Activated CD8-positive, alpha-beta memory T cell treated with anti-CD3 and anti-CD28 coated beads, Interleukin-2, amount 10 ng/mL, durations not matched to agents 7 days and 5 days (primary cell): ENCODE measurements at regions of chr16 and their contacts with region 1.

Region 1: GRCh38 chr16:8878521-8878911 is 3.6 kb upstream of the LITAFD start:
- DNase-seq: no peak
- ATAC-seq: no peak
- H3K4me3 Mint-ChIP-seq: no peak overlapping the region
- H3K27ac Mint-ChIP-seq: peak overlapping the region; percentile 64
- H3K4me1 Mint-ChIP-seq: peaks cover 37% of the 10 kb centered on the region
- H3K27me3 Mint-ChIP-seq: no peaks in the 10 kb centered on the region

Region 2: DNA sequence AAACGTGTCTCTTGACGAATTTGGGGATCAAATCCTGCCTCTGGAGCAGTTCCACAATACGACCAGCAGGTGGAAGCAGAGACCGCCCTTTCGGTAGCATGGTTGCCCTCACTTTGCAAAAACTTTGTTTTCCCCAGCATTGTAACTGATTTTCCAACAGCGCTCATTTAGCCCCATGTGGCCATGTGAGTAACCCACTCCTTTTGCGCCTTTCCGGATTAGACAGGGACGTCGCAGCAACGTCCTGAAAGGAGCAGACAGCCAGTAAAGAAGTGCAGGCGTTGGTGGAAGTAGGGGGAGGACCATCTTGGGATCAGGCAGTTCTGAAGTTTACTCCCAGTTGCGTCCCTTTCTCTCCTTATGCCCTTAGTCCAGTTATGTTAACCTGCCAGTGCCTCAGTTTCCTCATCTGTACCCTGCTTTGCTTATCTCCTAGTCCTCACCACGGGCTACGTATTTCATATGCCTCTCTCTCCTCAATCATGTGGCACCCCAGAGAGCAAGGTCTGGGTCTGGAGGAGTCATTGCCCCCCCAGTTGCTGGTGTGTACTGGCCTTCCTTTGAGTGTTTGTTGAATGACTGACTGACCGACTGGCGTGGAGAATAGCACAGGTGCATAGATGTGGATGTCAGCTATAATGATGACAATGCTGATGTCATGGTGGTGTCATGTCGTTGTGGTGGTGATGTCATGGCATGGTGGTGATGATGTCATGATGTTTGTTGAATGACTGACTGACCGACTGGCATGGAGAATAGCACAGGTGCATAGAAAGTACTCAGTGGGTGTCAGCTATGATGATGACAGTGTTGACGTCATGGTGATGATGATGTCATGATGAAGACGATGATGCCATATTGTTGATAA is 310.5 kb before region 1 on chr16:
- CTCF ChIA-PET with region 1: interaction called, 17 read pairs
- DNase-seq: peak; percentile 83
- ATAC-seq: peak; percentile 91
- H3K4me3 Mint-ChIP-seq: no peak overlapping the region
- H3K27ac Mint-ChIP-seq: peak overlapping the region; percentile 10
- H3K4me1 Mint-ChIP-seq: peaks cover 5% of the 10 kb centered on the region
- H3K27me3 Mint-ChIP-seq: peaks cover 2% of the 10 kb centered on the region

Region 3: GRCh38 chr16:8660841-8661301 is 217.6 kb before region 1 on chr16:
- CTCF ChIA-PET with region 1: interaction called, 20 read pairs
- DNase-seq: peak; percentile 68
- ATAC-seq: peak; percentile 61
- H3K4me3 Mint-ChIP-seq: no peak overlapping the region
- H3K27ac Mint-ChIP-seq: no peak overlapping the region
- H3K4me1 Mint-ChIP-seq: no peaks in the 10 kb centered on the region
- H3K27me3 Mint-ChIP-seq: no peaks in the 10 kb centered on the region

Region 4: DNA sequence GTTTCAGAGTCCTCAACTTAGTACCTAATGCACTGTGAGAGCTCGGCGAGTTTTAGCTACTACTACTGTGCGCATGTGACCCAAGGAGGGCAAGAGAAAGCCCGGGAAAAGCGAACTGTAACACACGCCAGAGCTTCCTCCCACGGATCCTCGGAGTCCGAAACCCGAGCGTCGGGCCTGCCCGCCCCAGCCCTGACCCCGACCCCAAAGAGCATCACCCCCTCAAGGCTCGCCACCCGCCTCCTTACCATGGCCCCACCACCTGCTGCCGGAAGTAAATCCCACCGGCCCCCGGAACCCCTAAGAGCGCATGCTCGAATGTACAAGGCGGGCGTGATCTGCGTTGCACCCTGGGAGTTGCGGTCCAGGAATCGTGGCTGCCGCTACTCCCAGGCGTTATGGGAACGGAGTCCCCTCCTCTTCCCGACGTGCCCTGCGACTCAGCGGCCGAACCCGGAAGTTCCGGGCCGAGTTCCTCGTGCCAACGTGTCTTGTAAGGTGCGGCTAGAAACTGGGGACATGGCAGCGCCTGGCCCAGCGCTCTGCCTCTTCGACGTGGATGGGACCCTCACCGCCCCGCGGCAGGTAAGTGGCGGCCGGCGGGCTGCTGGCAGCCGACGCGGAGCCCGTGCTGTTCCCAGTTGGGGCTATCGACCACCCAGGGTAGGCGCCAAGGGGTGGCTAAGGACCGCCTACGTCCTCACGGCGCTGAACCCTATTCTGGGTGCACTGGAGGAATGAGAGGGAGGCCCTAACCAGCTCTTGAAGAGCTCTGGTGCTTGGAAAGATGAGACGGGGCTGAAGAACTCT is 80.9 kb before region 1 on chr16 and contains the starts of genes PMM2 and TMEM186:
- CTCF ChIA-PET with region 1: interaction called, 10 read pairs
- DNase-seq: peak; percentile 98
- ATAC-seq: peak; percentile 92
- H3K4me3 Mint-ChIP-seq: peak within 1 kb of the TSS; percentile 91
- H3K27ac Mint-ChIP-seq: peak within 1 kb of the TSS; percentile 91
- H3K4me1 Mint-ChIP-seq: peaks cover 44% of the 10 kb centered on the region
- H3K27me3 Mint-ChIP-seq: no peaks in the 10 kb centered on the region
- total RNA-seq, gene PMM2: 36.4 to 47.1 TPM
- total RNA-seq, gene TMEM186: 14.0 to 16.1 TPM

Region 5: GRCh38 chr16:8855011-8855786 is 23.3 kb before region 1 on chr16:
- CTCF ChIA-PET with region 1: interaction called, 16 read pairs
- DNase-seq: no peak
- ATAC-seq: no peak
- H3K4me3 Mint-ChIP-seq: no peak overlapping the region
- H3K27ac Mint-ChIP-seq: peak overlapping the region; percentile 23
- H3K4me1 Mint-ChIP-seq: peaks cover 43% of the 10 kb centered on the region
- H3K27me3 Mint-ChIP-seq: no peaks in the 10 kb centered on the region

Region 6: DNA sequence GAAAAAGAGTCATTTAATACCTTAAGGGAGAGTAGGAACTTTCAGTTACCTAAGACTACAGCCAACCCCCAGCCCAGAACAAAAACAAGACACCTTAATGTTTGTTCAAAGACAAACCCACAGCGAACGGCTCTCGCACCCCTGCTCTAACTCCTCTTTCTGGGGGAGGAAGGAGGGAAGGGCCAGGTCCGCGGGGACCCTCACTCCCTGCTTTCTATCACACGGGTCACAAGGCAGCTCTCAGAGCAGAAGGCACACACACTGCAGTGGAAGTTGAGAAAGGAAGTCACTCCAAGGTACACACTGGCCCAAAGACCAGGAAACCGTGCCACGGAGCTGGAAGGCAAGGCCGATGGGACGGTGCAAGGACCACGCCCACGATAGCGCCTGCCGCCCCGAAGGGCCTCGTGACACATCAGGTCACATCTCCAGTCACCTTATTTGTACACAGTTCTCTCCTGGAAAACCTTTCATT is 13.6 kb after region 1 on chr16:
- CTCF ChIA-PET with region 1: interaction called, 16 read pairs
- DNase-seq: no peak
- ATAC-seq: peak; percentile 13
- H3K4me3 Mint-ChIP-seq: no peak overlapping the region
- H3K27ac Mint-ChIP-seq: peak overlapping the region; percentile 84
- H3K4me1 Mint-ChIP-seq: peaks cover 18% of the 10 kb centered on the region
- H3K27me3 Mint-ChIP-seq: no peaks in the 10 kb centered on the region